Panc1 (cell line): ENCODE measurements at regions of chr18 and their contacts with region 1.

Region 1: DNA sequence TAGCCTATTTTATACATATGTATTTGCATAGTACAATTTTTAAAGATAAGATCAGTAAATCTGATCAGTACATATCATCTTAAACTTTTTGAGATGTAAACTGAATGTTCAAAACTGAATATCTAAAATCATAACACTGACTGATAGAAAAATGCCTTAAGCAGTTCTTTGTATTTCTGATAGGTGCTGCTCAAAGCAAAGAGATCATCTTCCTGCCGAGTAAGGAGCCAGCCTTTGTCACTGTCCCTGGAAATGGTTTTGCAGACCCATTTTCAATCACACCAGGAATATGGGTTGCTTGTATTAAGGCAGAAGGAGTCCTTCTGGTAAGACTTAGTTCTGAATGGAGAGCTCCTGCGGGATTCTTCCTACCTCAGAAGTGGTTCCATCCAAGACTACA is 135.0 kb downstream of the LAMA3 start:
- DNase-seq: no peak
- ATAC-seq: no peak
- H3K4me3 ChIP-seq: no peak overlapping the region
- H3K27ac ChIP-seq: no peak overlapping the region
- H3K4me1 ChIP-seq: no peaks in the 10 kb centered on the region
- H3K27me3 ChIP-seq: no peaks in the 10 kb centered on the region; the same call in 1 of the 2 replicates
- CTCF ChIP-seq: peak; percentile 20; the same call in 1 of the 2 replicates

Region 2: GRCh38 chr18:23844991-23845680 is 20.9 kb after region 1 on chr18:
- CTCF ChIA-PET with region 1: no interaction called
- POLR2A ChIA-PET with region 1: no interaction called
- in situ Hi-C with region 1: no loop called
- intact Hi-C with region 1: no loop called
- DNase-seq: no peak
- ATAC-seq: no peak
- H3K4me3 ChIP-seq: no peak overlapping the region
- H3K27ac ChIP-seq: no peak overlapping the region
- H3K4me1 ChIP-seq: no peaks in the 10 kb centered on the region
- H3K27me3 ChIP-seq: peaks cover under 1% of the 10 kb centered on the region; the same call in 1 of the 2 replicates
- CTCF ChIP-seq: no peak

Region 3: DNA sequence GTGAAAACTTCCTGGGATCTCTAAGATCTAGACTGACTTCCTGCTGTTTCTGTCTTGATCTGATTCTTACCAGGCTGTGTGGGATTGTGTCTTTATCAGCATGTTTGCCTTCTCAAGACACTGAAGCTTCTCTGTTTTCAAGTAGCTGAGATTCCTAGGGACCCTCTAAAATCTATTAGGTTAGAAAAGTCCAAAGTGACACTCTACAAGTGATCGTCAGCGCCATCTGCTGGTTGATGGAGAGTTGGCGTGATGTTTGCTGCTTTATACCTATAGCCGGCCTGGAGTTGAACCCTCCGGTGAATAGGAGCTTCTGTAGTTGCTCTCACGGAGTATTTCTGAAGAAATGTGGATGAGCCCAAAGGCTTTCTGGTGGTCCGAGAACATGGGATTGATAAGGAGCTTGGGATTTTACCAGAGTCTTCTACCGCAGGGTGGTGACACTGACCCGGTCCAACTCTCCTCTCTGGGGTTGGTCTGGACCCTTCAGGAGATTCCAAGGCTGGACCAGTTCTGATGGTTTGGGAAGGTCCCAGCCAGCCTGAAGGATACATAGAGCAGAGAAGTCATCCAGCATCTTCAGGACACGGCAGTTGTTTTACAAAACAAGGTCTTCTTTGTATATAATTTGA is 94.3 kb after region 1 on chr18:
- CTCF ChIA-PET with region 1: no interaction called
- POLR2A ChIA-PET with region 1: no interaction called
- in situ Hi-C with region 1: no loop called
- intact Hi-C with region 1: loop called (anchors 5 kb)
- DNase-seq: peak; percentile 43
- ATAC-seq: peak; percentile 87
- H3K4me3 ChIP-seq: no peak overlapping the region
- H3K27ac ChIP-seq: no peak overlapping the region
- H3K4me1 ChIP-seq: no peaks in the 10 kb centered on the region
- H3K27me3 ChIP-seq: peaks cover 5% of the 10 kb centered on the region; the same call in 1 of the 2 replicates
- CTCF ChIP-seq: peak; percentile 93